Psoas muscle (tissue), 8 donors: ENCODE measurements at regions of chr2 and their contacts with region 1.

Region 1: DNA sequence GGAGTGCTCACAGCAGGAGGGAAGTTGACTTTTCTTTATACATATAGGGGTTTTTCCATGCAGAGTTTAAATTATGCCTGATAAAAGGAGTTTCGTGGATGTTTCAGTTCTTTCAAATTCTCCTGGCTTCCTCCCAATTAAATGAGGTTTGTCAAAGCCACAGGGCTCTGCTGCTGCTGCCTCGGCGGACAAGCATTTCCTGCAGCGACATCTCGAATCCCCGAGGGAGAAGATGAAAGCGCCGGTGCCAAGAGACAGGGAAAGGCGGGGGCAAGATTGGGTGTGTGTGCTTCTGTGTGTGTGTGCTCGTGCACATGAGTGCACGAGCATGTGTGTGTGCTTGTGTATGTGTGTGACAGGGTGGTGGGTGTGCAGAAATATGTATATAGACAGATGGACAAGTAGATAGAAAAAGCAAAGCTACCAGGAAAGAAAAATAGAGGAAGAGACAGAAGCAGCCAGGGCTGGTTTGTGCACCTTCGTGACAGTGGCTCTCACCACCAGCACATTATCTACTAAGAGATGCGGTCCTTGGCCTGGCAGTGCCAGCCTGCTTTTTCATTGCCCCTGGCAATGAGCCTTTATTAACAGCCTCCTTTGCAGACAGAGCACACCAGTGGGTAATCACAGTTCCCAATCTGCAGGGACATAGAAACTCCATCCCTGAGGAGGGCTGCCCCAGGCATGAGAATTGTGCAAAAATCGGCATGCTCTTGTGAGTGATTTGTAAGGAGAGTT is 76.2 kb downstream of the CDK15 start:
- DNase-seq: peak in 1 of 2 donors; percentile 19
- ATAC-seq: peak in 1 of 4 donors; percentile 20
- H3K4me3 ChIP-seq: no peak overlapping the region
- H3K27ac ChIP-seq: peak overlapping the region; percentile 92
- H3K4me1 ChIP-seq: peaks cover 39% of the 10 kb centered on the region
- H3K27me3 ChIP-seq: peaks cover 0 to 2% (median 0%) of the 10 kb centered on the region in 3 donors
- CTCF ChIP-seq: no peak

Region 2: DNA sequence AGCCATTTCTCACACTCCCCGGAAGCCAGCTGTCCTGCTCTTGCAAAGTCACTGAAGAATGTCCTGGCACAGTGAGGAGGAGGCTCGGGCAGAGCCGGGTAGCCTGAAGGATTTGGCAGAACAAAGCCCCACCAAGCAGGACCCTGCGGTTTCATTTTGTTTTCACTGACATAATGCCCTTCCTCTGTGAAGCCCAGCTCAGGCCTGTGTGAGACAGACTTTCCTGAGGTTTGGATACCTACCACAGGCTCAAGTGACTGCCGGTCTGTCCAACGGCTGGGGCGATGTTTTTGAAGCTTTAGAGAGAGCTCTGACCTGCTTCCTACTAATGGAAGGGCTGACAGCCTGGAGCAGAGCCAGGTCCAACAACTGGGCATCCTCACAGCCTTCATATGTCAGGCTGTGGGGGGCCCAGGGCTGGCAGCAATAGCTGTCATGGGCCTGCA is 51.3 kb after region 1 on chr2:
- intact Hi-C with region 1: loop called in 1 of 2 experiments (anchors 5 kb)
- DNase-seq: peak; percentile 19 to 65
- ATAC-seq: peak; percentile 90 to 94 (median 92)
- H3K4me3 ChIP-seq: peak overlapping the region; percentile 20
- H3K27ac ChIP-seq: peak overlapping the region; percentile 85
- H3K4me1 ChIP-seq: peaks cover 31% of the 10 kb centered on the region
- H3K27me3 ChIP-seq: no peaks in the 10 kb centered on the region
- CTCF ChIP-seq: no peak

Region 3: DNA sequence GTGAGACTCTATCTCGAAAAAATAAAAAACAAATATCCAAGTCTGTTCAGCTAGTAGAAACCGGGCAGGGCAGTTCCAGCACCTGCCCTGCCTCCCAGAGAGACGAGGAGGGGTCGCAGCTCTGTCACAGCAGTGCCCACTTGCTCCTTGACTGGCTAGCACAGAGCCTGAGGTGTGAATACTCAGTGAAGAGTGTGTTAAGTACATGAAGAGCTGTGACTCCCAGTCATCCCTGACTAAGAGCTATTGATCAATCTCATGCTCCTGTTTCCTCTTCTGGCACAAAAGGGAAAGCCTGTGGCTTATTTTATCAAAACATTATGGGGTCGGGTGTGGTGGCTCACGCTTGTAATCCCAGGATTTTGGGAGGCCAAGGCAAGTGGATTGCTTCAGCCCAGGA is 68.1 kb after region 1 on chr2:
- intact Hi-C with region 1: loop called in 1 of 2 experiments (anchors 5 kb)
- DNase-seq: no peak
- ATAC-seq: no peak
- H3K4me3 ChIP-seq: no peak overlapping the region
- H3K27ac ChIP-seq: no peak overlapping the region
- H3K4me1 ChIP-seq: peaks cover 32% of the 10 kb centered on the region
- H3K27me3 ChIP-seq: no peaks in the 10 kb centered on the region
- CTCF ChIP-seq: no peak

Region 4: GRCh38 chr2:202025816-202026215 is 143.3 kb after region 1 on chr2:
- intact Hi-C with region 1: loop called (anchors 5 to 10 kb)
- DNase-seq: no peak
- ATAC-seq: no peak
- H3K4me3 ChIP-seq: no peak overlapping the region
- H3K27ac ChIP-seq: peak overlapping the region; percentile 50
- H3K4me1 ChIP-seq: peaks cover 11% of the 10 kb centered on the region
- H3K27me3 ChIP-seq: no peaks in the 10 kb centered on the region
- CTCF ChIP-seq: no peak

Region 5: DNA sequence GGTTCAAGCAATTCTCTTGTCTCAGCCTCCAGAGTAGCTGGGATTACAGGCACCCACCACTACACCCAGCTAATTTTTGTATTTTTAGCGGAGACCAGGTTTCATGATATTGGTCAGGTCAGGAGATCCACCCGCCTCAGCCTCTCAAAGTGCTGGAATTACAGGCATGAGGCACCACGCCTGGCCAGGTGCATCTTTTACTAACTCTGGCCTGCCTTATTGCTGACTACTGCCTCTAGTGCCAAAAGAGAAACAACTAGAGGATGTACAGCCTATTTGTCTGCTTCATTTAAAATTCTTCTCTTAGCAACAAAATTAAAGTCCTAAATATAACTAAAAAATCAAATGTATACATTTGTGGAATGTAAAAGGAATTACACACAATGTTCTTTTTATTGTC is 609.0 kb after region 1 on chr2:
- intact Hi-C with region 1: no loop called
- DNase-seq: no peak
- ATAC-seq: no peak
- H3K4me3 ChIP-seq: no peak overlapping the region
- H3K27ac ChIP-seq: no peak overlapping the region
- H3K4me1 ChIP-seq: no peaks in the 10 kb centered on the region
- H3K27me3 ChIP-seq: no peaks in the 10 kb centered on the region
- CTCF ChIP-seq: no peak